ENCODE measurements at regions of chr14 and their contacts with region 1.

Region 1: GRCh38 chr14:102893452-102893851 is 29.0 kb upstream of the AMN start:
- DNase-seq: no peak
- H3K4me3 Mint-ChIP-seq: no peak overlapping the region
- H3K27ac Mint-ChIP-seq: no peak overlapping the region
- H3K4me1 Mint-ChIP-seq: peaks cover 8% of the 10 kb centered on the region
- H3K27me3 Mint-ChIP-seq: no peaks in the 10 kb centered on the region

Region 2: DNA sequence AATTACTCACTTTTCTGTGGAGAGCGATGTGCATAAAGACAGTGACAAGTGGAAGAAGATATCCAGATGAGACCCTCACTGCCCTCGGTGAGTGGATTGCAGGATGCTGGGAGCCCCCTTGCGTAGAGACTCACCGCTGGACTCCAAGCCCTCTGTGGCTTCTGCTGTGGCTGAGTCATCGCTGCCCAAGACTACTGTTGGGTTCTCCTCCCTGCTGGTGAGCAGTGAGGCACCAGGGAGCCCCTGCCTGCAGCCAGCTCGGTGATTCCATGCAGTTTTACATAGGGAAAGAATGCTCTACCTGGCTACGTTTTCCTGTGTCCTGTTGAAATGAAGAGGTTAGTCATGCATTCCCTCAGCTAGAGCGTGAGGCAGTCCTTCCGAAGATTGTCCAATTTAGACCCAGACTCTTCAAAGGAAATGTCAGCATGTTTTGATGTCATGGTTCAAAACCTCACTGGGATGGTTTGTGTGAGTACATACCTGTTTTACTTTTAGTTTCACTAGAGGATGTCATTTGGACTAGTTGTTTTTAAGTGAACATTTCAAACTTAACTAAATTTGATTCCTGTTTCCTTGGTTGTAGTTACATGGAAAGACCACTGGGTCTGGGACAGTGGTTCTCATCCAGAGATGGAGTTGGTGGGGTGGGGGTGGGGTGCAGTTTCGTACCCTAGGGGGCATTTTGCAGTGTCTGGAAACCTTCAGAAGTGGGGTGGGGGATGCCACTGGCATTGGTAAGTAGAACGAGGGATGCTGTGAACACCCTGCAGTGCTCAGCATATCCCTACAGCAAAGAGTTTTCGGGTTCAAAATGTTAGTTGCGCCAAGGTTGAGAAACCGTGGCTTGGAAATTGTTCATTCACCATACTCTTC is 87.8 kb before region 1 on chr14:
- intact Hi-C with region 1: no loop called
- DNase-seq: peak; percentile 47
- H3K4me3 Mint-ChIP-seq: peak overlapping the region; percentile 71
- H3K27ac Mint-ChIP-seq: peak overlapping the region; percentile 95
- H3K4me1 Mint-ChIP-seq: peaks cover 64% of the 10 kb centered on the region
- H3K27me3 Mint-ChIP-seq: no peaks in the 10 kb centered on the region

Region 3: DNA sequence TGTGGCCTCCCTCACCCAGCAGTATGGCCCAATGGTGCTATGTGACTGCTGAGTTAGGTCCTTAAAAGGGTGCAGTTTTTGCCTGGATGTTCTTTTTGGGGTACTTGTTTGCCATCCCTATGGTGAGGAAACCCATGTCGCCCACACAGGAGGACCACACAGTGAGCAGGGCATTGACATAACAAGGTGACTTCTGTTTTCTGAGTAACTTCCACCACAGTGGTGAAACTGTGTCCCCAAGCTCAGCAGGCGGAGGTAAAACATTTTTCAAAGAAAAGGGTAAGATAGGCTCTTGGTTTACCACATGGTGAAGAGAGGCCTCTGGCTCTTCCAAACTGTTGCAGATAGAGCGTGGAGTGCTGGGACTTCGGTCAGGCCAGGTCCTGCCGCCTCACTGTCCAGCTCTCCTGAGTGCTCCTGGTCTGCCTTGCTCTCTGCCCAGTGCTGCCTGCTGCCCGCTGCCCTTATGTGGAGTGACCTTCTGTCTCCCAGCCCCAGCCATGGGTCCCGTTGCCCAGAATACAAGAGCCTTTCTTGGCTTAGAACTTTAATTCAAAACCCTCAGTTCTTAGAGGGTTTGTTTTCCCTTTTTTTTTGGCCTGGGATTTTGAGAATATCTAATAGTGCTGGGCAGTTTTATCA is 62.2 kb before region 1 on chr14:
- intact Hi-C with region 1: loop called (anchors 1 kb)
- DNase-seq: no peak
- H3K4me3 Mint-ChIP-seq: peak overlapping the region; percentile 43
- H3K27ac Mint-ChIP-seq: peak overlapping the region; percentile 53
- H3K4me1 Mint-ChIP-seq: peaks cover 63% of the 10 kb centered on the region
- H3K27me3 Mint-ChIP-seq: no peaks in the 10 kb centered on the region

Measured in activated T-helper 1 cell treated with anti-CD3 and anti-CD28 coated beads, Interleukin-12 subunit alpha, Interleukin-12 subunit beta, Interleukin-2, Interleukin-4 antibody, amounts not matched to agents 30 ng/mL and 10 ng/mL and 1 ng/mL, durations not matched to agents 14 hours and 24 hours and 36 hours (primary cell).